ENCODE measurements at regions of chr16 and their contacts with region 1.

Region 1: GRCh38 chr16:89201439-89202377 is 1.4 kb upstream of the SLC22A31 start:
- DNase-seq: peak; percentile 78
- ATAC-seq: peak; percentile 32
- H3K4me3 ChIP-seq: peak overlapping the region; percentile 62 to 99 (median 92)
- H3K27ac ChIP-seq: peak overlapping the region; percentile 82
- H3K4me1 ChIP-seq: peaks cover 33% of the 10 kb centered on the region
- H3K27me3 ChIP-seq: no peaks in the 10 kb centered on the region; a peak in 1 of 5 replicates
- CTCF ChIP-seq: no peak
- EP300 ChIP-seq: no peak
- POLR2A ChIP-seq: peak in 1 of 2 experiments; percentile 91; a peak in 2 of 4 replicates
- RAD21 ChIP-seq: peak; percentile 76

Region 2: GRCh38 chr16:89115216-89115861 is 86.4 kb before region 1 on chr16:
- CTCF ChIA-PET with region 1: no interaction called
- POLR2A ChIA-PET with region 1: no interaction called
- in situ Hi-C with region 1: no loop called
- intact Hi-C with region 1: no loop called
- DNase-seq: no peak
- ATAC-seq: no peak
- H3K4me3 ChIP-seq: no peak overlapping the region
- H3K27ac ChIP-seq: no peak overlapping the region
- H3K4me1 ChIP-seq: peaks cover 12% of the 10 kb centered on the region
- H3K27me3 ChIP-seq: no peaks in the 10 kb centered on the region
- CTCF ChIP-seq: no peak
- EP300 ChIP-seq: no peak
- POLR2A ChIP-seq: no peak
- RAD21 ChIP-seq: no peak

Region 3: GRCh38 chr16:89187155-89188041 is 14.3 kb before region 1 on chr16:
- CTCF ChIA-PET with region 1: no interaction called
- POLR2A ChIA-PET with region 1: interaction called, 44 read pairs
- in situ Hi-C with region 1: no loop called
- intact Hi-C with region 1: loop called (anchors 2 kb)
- DNase-seq: no peak
- ATAC-seq: peak; percentile 4
- H3K4me3 ChIP-seq: no peak overlapping the region
- H3K27ac ChIP-seq: peak overlapping the region; percentile 11
- H3K4me1 ChIP-seq: peaks cover 51% of the 10 kb centered on the region
- H3K27me3 ChIP-seq: peaks cover 0 to 30% of the 10 kb centered on the region in 2 experiments; a peak in 4 of 5 replicates
- CTCF ChIP-seq: peak; percentile 43
- EP300 ChIP-seq: no peak
- POLR2A ChIP-seq: no peak
- RAD21 ChIP-seq: no peak